ENCODE measurements at regions of chr6 and their contacts with region 1.

Region 1: GRCh38 chr6:16481697-16482399 is 243.5 kb downstream of the GMPR start:
- DNase-seq: peak; percentile 71
- H3K4me3 Mint-ChIP-seq: peak overlapping the region; percentile 38
- H3K27ac Mint-ChIP-seq: peak overlapping the region; percentile 98
- H3K4me1 Mint-ChIP-seq: peaks cover 89% of the 10 kb centered on the region
- H3K27me3 Mint-ChIP-seq: no peaks in the 10 kb centered on the region

Region 2: DNA sequence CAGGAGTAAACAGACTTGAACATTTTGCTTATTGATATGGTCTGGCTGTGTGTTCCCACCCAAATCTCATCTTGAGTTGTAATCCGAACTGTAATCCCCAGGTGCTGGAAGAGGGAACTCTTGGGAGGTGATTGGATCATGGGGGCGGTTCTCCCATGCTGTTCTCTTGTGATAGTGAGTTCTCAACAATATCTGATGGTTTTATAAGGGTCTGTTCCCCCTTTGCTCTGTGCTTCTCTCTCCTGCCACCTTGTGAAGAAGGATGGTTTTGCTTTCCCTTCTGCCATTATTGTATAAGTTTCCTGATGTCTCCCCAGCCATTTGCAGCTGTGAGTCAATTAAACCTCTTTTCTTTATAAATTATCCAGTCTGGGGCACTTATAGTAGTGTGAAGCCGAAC is 313.0 kb before region 1 on chr6:
- intact Hi-C with region 1: no loop called
- DNase-seq: no peak
- H3K4me3 Mint-ChIP-seq: no peak overlapping the region
- H3K27ac Mint-ChIP-seq: no peak overlapping the region
- H3K4me1 Mint-ChIP-seq: peaks cover 41% of the 10 kb centered on the region
- H3K27me3 Mint-ChIP-seq: peaks cover 3% of the 10 kb centered on the region

Region 3: GRCh38 chr6:16319813-16320532 is 161.9 kb before region 1 on chr6:
- intact Hi-C with region 1: loop called (anchors 2 kb)
- DNase-seq: peak; percentile 65
- H3K4me3 Mint-ChIP-seq: peak overlapping the region; percentile 60
- H3K27ac Mint-ChIP-seq: peak overlapping the region; percentile 84
- H3K4me1 Mint-ChIP-seq: peaks cover 68% of the 10 kb centered on the region
- H3K27me3 Mint-ChIP-seq: no peaks in the 10 kb centered on the region

Region 4: GRCh38 chr6:16438718-16439591 is 42.9 kb before region 1 on chr6:
- intact Hi-C with region 1: loop called (anchors 2 kb)
- DNase-seq: no peak
- H3K4me3 Mint-ChIP-seq: no peak overlapping the region
- H3K27ac Mint-ChIP-seq: peak overlapping the region; percentile 32
- H3K4me1 Mint-ChIP-seq: peaks cover 60% of the 10 kb centered on the region
- H3K27me3 Mint-ChIP-seq: no peaks in the 10 kb centered on the region

Region 5: GRCh38 chr6:16450821-16451220 is 31.0 kb before region 1 on chr6:
- intact Hi-C with region 1: no loop called
- DNase-seq: no peak
- H3K4me3 Mint-ChIP-seq: no peak overlapping the region
- H3K27ac Mint-ChIP-seq: no peak overlapping the region
- H3K4me1 Mint-ChIP-seq: peaks cover 28% of the 10 kb centered on the region
- H3K27me3 Mint-ChIP-seq: no peaks in the 10 kb centered on the region

Region 6: DNA sequence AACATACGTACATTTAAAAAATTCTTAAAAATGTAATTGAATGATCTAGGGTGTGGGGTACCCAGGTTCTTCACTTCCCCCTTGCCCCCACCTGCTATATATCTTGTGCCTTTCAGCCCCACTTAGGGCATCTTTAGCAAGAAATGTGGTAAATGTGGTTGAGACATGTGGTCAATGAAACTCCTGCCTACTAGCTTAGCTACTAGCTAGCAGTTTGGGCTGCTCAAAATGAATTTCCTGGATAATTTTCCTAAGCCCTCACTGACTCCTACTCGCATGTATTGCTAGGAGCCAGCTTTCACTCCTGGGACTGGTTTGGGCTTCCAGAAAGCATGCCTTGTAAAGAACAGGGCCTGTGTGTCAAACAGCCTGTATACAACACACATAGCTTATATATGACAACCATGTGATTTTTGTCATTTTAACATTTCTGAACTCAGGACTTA is 22.1 kb after region 1 on chr6:
- intact Hi-C with region 1: loop called (anchors 2 kb)
- DNase-seq: no peak
- H3K4me3 Mint-ChIP-seq: no peak overlapping the region
- H3K27ac Mint-ChIP-seq: peak overlapping the region; percentile 68
- H3K4me1 Mint-ChIP-seq: peaks cover 59% of the 10 kb centered on the region
- H3K27me3 Mint-ChIP-seq: no peaks in the 10 kb centered on the region

Region 7: GRCh38 chr6:16533721-16534136 is 51.9 kb after region 1 on chr6:
- intact Hi-C with region 1: loop called (anchors 2 kb)
- DNase-seq: no peak
- H3K4me3 Mint-ChIP-seq: no peak overlapping the region
- H3K27ac Mint-ChIP-seq: peak overlapping the region; percentile 52
- H3K4me1 Mint-ChIP-seq: peaks cover 36% of the 10 kb centered on the region
- H3K27me3 Mint-ChIP-seq: no peaks in the 10 kb centered on the region

Region 8: GRCh38 chr6:16670183-16670582 is 188.3 kb after region 1 on chr6:
- intact Hi-C with region 1: loop called (anchors 5 kb)
- DNase-seq: no peak
- H3K4me3 Mint-ChIP-seq: peak overlapping the region; percentile 50
- H3K27ac Mint-ChIP-seq: peak overlapping the region; percentile 89
- H3K4me1 Mint-ChIP-seq: peaks cover 74% of the 10 kb centered on the region
- H3K27me3 Mint-ChIP-seq: no peaks in the 10 kb centered on the region

Region 9: DNA sequence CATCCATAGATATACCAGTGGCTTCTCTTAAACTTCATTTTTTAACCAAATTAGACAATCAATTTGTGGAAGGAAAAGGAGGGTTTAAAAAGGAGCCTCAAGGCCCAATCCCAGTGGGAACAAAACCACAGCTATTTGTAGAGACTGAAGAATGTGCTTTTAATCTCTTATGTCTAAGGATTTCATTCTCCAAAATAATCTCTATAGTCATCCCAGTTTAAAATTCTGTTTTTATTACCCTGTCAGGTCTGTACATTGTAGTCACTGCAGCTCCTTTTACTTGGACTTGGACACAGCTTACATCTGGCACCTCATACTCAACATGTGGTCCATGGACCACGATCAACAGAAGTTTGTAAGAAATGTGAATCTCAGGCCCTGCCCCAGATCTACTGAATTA is 467.9 kb after region 1 on chr6:
- intact Hi-C with region 1: loop called (anchors 5 kb)
- DNase-seq: no peak
- H3K4me3 Mint-ChIP-seq: no peak overlapping the region
- H3K27ac Mint-ChIP-seq: no peak overlapping the region
- H3K4me1 Mint-ChIP-seq: peaks cover 35% of the 10 kb centered on the region
- H3K27me3 Mint-ChIP-seq: peaks cover 37% of the 10 kb centered on the region

Region 10: DNA sequence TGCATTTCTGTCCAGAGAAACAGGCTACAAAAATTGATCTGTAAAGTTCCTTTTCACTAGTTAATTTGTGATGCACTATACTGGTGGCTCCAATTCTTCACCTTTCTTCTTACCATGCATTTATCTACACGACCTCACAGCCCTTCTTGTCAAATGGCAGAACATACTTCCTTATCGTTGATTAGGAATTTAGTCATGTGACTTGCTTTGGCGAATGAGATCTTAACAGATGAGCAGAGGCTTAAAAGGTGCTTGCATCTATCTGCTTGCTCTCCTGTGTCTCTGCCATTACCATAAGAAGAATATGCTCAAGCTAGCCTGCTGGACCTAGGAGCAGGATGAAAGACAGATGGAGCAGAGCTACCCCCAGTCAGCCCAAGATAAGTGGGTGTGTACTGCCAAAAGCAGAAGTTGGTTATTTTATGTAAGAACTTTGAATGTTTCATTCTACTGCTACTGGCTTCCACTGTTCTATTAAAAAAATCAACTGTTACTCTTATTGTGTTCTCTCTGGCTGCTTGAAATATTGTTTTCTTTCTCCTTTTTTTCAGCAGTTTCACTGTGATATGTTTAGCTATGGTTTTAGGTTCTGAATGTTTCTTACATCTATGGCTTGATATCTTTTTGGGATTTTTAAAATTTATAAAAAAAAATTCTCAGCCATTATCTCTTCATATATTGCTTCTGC is 759.1 kb after region 1 on chr6:
- intact Hi-C with region 1: no loop called
- DNase-seq: no peak
- H3K4me3 Mint-ChIP-seq: no peak overlapping the region
- H3K27ac Mint-ChIP-seq: no peak overlapping the region
- H3K4me1 Mint-ChIP-seq: no peaks in the 10 kb centered on the region
- H3K27me3 Mint-ChIP-seq: peaks cover 1% of the 10 kb centered on the region

Measured in activated T-helper 2 cell treated with anti-CD3 and anti-CD28 coated beads, Interferon-gamma antibody, Interleukin-2, Interleukin-4, amounts not matched to agents 10 μg/mL and 5 μg/mL and 100 μg/mL, durations not matched to agents 14 hours and 24 hours and 36 hours (primary cell).